ENCODE measurements at regions of chr4 and their contacts with region 1.

Region 1: DNA sequence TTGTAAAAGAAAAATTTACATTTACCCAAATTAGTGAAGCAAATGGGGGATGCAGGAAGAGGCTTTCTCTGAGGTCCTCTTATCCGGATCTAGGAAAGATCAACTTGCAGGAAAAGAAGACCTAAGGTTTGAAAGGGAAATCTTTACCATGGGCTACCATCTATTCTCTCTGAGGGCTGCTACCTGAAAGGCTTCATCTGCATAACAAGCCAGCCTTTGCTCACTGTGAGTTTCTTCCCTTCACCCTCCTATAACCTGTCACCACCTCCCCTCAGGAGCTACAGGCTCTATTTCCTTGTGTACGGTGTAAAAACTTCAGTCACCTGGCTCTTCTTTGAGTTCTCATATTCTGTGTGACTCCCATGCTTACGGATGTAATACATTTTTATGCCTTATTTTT is 118.6 kb upstream of the BEND4 start:
- DNase-seq: no peak
- ATAC-seq: no peak
- H3K4me3 ChIP-seq: no peak overlapping the region
- H3K27ac ChIP-seq: no peak overlapping the region
- H3K4me1 ChIP-seq: no peaks in the 10 kb centered on the region
- H3K27me3 ChIP-seq: no peaks in the 10 kb centered on the region
- CTCF ChIP-seq: no peak
- EP300 ChIP-seq: no peak
- POLR2A ChIP-seq: no peak
- RAD21 ChIP-seq: no peak

Region 2: GRCh38 chr4:41512136-41512535 is 759.0 kb before region 1 on chr4:
- CTCF ChIA-PET with region 1: no interaction called
- POLR2A ChIA-PET with region 1: no interaction called
- in situ Hi-C with region 1: no loop called
- intact Hi-C with region 1: loop called (anchors 5 kb)
- DNase-seq: no peak
- ATAC-seq: no peak
- H3K4me3 ChIP-seq: no peak overlapping the region
- H3K27ac ChIP-seq: no peak overlapping the region
- H3K4me1 ChIP-seq: no peaks in the 10 kb centered on the region
- H3K27me3 ChIP-seq: no peaks in the 10 kb centered on the region; a peak in 1 of 5 replicates
- CTCF ChIP-seq: no peak
- EP300 ChIP-seq: no peak
- POLR2A ChIP-seq: no peak
- RAD21 ChIP-seq: no peak

Measured in HepG2 (cell line).